ENCODE measurements at regions of chr21 and their contacts with region 1.

Region 1: DNA sequence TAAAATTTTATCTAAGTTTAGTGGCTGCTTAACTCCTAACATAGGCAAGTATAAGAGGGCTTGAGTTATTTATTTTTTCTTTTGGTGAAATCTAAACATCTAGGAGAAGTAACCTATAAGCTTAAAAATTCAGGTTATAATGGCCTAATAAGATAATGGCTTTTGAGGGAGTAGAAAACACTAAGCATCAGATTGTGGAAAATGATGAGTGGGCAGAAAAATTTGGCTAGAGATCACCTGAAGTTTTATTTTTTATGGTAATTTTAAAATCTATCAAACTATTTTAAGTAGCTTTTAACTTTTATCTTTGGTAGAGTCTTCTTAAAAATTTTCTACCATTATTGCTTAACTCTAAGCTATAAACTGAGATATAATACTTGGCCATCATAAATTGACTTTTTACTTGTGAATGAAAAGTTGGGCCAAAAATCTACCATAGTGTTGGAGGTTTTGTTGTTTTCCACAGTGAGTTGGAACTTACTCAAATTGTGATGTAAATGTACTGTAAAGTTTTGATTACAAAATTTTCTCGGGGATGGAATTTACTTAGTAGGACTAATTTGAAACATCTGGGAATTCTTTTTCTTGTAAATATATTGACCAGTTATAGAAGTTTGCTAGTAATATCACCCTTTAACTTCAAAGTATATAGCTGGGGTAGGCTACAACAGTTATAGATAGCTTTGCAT is 63.9 kb downstream of the USP25 start:
- DNase-seq: no peak
- ATAC-seq: no peak
- H3K4me3 ChIP-seq: no peak overlapping the region
- H3K27ac ChIP-seq: no peak overlapping the region
- H3K4me1 ChIP-seq: peaks cover 22% of the 10 kb centered on the region
- H3K27me3 ChIP-seq: no peaks in the 10 kb centered on the region
- CTCF ChIP-seq: no peak

Region 2: DNA sequence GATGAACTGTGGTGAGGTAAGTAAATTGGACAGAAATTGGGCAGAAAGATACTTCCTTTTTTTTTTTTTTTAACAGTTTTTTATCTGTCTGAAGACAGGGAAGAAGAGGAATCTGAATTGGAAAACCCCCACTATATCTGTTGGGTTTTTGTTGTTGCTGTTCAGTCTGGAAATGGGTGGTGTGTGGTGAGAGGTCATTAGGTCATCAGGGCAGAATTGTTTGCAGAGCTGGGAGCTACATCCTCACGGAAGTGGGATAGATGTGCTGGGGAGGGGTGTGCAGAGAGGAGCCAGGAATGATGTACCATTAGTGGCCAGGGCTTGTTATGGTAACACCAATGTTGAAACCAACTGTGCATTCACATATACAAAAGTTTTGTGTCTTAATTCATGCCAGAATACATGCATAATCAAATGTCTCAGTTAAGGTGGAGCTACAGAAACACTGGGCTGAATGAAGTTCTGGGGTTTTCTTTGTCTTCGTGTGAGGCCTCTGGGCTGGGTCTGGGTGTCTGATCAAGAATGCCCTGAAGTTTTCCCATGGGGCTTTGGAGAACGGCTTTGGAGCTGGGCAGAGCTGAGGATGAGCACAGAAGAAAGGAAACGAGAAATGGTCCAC is 51.5 kb before region 1 on chr21:
- CTCF ChIA-PET with region 1: no interaction called
- POLR2A ChIA-PET with region 1: no interaction called
- intact Hi-C with region 1: no loop called
- DNase-seq: no peak
- ATAC-seq: peak; percentile 19; the same call in 1 of the 2 replicates
- H3K4me3 ChIP-seq: no peak overlapping the region
- H3K27ac ChIP-seq: no peak overlapping the region
- H3K4me1 ChIP-seq: peaks cover 37% of the 10 kb centered on the region
- H3K27me3 ChIP-seq: no peaks in the 10 kb centered on the region
- CTCF ChIP-seq: no peak

Region 3: DNA sequence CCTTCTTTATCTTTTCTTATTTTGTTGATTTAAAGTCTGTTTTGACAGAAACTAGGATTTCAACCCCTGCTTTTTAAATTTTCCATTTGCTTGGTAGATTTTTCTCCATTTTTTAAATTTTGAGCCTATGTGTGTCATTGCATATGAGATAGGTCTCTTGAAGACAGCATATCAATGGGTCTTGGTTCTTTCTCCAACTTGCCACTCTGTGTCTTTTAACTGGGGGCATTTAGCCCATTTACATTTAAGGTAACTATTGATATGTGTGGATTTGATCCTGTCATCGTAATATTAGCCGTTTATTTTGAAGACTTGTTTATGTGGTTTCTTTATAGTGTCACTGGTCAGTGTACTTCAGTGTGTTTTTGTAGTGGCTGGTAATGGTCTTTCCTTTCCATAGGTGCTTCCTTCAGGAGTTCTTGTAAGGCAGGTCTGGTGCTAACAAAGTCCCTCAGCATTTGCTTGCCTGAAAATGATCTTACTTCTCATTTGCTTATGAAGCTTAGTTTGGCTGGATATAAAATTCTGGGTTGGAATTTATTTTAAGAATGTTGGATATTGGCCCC is 159.9 kb after region 1 on chr21:
- CTCF ChIA-PET with region 1: no interaction called
- POLR2A ChIA-PET with region 1: no interaction called
- intact Hi-C with region 1: no loop called
- DNase-seq: no peak
- ATAC-seq: no peak
- H3K4me3 ChIP-seq: no peak overlapping the region
- H3K27ac ChIP-seq: no peak overlapping the region
- H3K4me1 ChIP-seq: no peaks in the 10 kb centered on the region
- H3K27me3 ChIP-seq: no peaks in the 10 kb centered on the region
- CTCF ChIP-seq: no peak

Region 4: DNA sequence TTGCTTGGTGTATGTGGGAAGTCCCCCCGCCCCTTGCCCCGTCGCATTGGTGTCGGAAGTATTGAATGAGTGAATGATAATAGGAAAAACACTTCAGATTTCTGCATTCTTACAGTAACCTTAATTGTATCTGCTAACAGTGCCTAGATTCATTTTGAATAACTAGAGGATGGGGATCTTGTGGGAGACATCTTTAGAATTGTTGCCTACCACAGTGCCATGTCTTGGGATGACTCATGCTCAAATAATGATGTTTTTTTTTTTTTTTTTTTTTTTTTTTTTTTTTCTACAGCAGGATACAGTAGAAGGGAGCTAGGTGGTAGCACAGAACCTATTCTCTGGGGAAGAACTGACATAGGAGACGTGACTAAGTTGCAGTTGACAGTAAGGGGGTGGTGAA is 174.0 kb after region 1 on chr21:
- CTCF ChIA-PET with region 1: no interaction called
- POLR2A ChIA-PET with region 1: interaction called, 13 read pairs
- intact Hi-C with region 1: no loop called
- DNase-seq: peak; percentile 40
- ATAC-seq: no peak
- H3K4me3 ChIP-seq: no peak overlapping the region
- H3K27ac ChIP-seq: no peak overlapping the region
- H3K4me1 ChIP-seq: no peaks in the 10 kb centered on the region
- H3K27me3 ChIP-seq: peaks cover 22% of the 10 kb centered on the region; the same call in 1 of the 2 replicates
- CTCF ChIP-seq: no peak